GM12878 (cell line): ENCODE measurements at regions of chr16 and their contacts with region 1.

Region 1: DNA sequence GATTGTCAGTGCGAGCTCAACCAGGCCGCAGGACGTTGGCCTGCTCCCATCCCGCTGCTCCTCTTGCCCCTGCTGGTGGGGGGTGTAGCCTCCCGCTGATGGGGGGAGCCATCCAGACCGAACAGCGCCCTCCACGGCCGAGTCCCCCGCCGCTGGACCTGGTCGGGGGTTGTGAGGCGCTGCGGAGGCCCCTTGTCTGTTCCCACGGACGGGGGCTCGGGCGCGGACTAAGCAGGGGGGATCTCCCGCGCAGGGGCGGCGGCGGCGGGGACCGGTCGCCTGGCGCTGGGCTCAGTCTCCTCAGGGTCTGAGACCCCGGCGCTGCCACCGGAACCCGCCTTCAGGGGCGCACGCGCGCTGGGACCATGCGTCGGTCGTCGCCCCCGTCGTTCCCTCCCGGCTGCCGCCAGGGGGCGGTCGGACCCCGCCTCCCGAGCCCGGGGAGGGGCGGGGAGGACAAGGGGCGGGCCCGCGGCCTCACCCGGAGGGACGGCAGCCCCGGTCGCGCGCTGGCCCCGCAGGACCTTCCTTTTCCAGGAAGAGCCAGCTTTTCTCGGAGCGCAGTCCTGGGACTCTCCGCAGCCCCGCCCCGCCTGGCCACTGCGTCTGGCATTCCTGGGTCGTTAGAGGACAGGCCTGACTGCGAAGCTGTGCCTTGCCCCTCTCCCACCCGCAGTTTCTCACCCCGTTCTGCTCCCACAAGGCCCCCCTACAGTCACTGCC is 6.3 kb upstream of the IL32 start:
- DNase-seq: no peak
- ATAC-seq: peak; percentile 97
- H3K4me3 ChIP-seq: peak overlapping the region; percentile 87
- H3K27ac ChIP-seq: peak overlapping the region; percentile 70
- H3K4me1 ChIP-seq: peaks cover 16% of the 10 kb centered on the region
- H3K27me3 ChIP-seq: no peaks in the 10 kb centered on the region
- CTCF ChIP-seq: peak; percentile 71 to 94 (median 85)
- EP300 ChIP-seq: no peak
- POLR2A ChIP-seq: peak; percentile 71
- RAD21 ChIP-seq: peak; percentile 93

Region 2: DNA sequence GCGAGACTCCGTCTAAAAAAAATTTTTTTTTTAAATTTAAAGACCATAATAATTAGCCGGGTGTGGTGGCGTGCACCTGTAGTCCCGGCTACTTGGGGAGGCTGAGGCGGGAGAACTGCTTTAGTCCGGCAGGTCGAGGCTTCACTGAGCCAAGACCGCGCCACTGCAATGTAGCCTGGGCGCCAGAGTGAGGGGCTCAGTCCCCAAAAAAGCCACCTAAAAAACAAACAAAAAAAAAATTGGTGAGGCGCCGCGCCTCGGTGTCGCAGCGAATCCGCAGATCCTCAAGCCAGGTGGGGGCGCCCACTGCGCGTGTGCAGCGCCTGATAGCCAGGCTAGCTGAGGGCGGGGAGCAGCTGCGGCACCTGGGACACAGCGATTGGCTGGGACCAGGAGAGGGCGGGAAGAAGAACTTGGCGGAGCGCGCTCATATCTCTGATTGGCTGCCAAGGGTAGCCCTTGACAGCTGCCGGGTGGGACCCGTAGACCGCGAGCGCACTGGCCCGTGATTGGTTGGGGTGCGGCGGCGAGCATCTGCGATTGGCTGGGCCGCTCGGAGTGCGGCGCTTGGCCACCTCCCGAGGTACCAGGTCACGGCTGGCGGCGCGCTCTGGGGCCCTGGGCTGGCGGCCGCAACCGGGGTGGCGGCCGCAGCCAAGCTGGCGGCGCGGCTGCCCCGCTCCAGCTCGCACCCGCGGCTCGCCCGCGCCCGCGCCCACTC is 55.4 kb before region 1 on chr16:
- CTCF ChIA-PET with region 1: interaction called, 10 read pairs
- POLR2A ChIA-PET with region 1: no interaction called
- RAD21 ChIA-PET with region 1: interaction called, 6 read pairs
- SMC1A ChIA-PET with region 1: interaction called, 5 read pairs
- in situ Hi-C with region 1: no loop called
- intact Hi-C with region 1: no loop called
- DNase-seq: peak; percentile 97
- ATAC-seq: peak; percentile 100
- H3K4me3 ChIP-seq: no peak overlapping the region
- H3K27ac ChIP-seq: no peak overlapping the region
- H3K4me1 ChIP-seq: peaks cover 17% of the 10 kb centered on the region
- H3K27me3 ChIP-seq: peaks cover 0 to 7% of the 10 kb centered on the region in 2 experiments; a peak in 3 of 4 replicates
- CTCF ChIP-seq: peak; percentile 56 to 75 (median 64)
- EP300 ChIP-seq: no peak
- POLR2A ChIP-seq: no peak
- RAD21 ChIP-seq: peak; percentile 71

Region 3: DNA sequence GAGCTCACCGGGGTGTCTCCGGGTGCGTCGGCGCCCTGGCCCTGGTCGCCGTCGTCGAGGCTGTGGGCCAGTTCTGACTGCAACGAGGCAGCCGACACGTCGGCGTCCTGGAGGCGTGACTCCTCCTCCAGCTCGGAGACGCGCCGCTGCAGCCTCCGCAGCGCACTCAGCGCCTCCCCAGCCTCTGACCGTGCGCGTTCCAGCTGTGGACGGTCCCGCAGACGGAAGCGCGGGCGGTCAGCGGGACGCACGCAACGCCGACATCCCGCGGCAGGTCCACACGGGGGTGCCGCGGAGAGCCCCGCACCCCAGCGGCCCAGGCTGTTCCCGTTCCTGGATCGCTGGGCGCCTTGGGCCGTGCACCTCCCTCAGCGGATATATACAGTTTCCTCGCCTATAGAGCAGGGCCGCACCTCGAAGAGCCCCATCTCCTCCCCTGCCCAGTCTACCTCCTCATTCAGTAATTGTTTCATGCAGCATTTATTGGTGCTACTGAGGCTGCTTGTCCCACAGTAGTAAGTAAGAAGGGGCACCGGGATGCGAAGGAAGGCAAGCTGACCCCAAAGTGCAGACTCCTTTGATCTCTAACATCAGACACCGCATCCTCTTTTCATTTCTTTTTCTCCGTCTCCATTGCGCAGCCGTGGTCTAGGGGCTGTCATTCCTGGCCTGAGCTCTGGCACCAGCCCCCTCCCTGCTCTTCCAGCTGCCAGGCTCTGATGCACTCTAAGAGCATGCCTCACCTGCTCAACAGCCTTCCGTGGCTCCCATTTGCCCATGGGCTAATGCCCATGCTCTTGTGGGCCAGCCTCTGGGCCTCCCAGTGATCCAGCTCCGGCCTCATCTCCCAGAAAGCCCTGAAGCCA is 29.4 kb before region 1 on chr16:
- CTCF ChIA-PET with region 1: interaction called, 62 read pairs
- POLR2A ChIA-PET with region 1: interaction called, 4 read pairs
- RAD21 ChIA-PET with region 1: interaction called, 28 read pairs
- SMC1A ChIA-PET with region 1: interaction called, 5 read pairs
- in situ Hi-C with region 1: no loop called
- intact Hi-C with region 1: no loop called
- DNase-seq: no peak
- ATAC-seq: no peak
- H3K4me3 ChIP-seq: no peak overlapping the region
- H3K27ac ChIP-seq: no peak overlapping the region
- H3K4me1 ChIP-seq: peaks cover 6% of the 10 kb centered on the region
- H3K27me3 ChIP-seq: peaks cover 7 to 8% of the 10 kb centered on the region in 2 experiments
- CTCF ChIP-seq: no peak
- EP300 ChIP-seq: no peak
- POLR2A ChIP-seq: peak; percentile 22; the same call in 1 of the 2 replicates
- RAD21 ChIP-seq: no peak

Region 4: DNA sequence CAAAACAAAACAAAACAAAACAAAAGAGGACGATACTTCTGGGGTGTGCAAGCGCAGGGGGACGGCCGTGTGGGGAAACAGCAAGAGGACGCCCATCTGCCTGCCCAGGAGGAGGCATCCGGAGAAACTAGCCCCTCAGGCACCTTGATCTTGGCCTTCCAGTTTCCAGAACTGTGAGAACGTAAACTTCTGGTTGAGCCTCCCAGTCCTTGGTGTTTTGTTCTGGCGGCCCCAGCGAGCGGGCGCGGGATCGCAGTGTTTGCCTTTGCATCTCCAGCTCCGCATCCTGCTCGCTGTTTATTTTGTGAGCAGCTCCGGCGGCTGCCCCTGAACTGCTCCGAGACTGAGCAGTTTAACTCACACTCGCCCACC is 13.8 kb before region 1 on chr16:
- CTCF ChIA-PET with region 1: interaction called, 23 read pairs
- POLR2A ChIA-PET with region 1: no interaction called
- RAD21 ChIA-PET with region 1: interaction called, 3 read pairs
- SMC1A ChIA-PET with region 1: interaction called, 4 read pairs
- in situ Hi-C with region 1: no loop called
- intact Hi-C with region 1: no loop called
- DNase-seq: no peak
- ATAC-seq: peak; percentile 45
- H3K4me3 ChIP-seq: peak overlapping the region; percentile 82; the same call in 1 of the 2 replicates
- H3K27ac ChIP-seq: no peak overlapping the region
- H3K4me1 ChIP-seq: peaks cover 2% of the 10 kb centered on the region; the same call in 1 of the 2 replicates
- H3K27me3 ChIP-seq: peaks cover 0 to 1% of the 10 kb centered on the region in 2 experiments; a peak in 2 of 4 replicates
- CTCF ChIP-seq: no peak
- EP300 ChIP-seq: no peak
- POLR2A ChIP-seq: no peak
- RAD21 ChIP-seq: no peak

Region 5: DNA sequence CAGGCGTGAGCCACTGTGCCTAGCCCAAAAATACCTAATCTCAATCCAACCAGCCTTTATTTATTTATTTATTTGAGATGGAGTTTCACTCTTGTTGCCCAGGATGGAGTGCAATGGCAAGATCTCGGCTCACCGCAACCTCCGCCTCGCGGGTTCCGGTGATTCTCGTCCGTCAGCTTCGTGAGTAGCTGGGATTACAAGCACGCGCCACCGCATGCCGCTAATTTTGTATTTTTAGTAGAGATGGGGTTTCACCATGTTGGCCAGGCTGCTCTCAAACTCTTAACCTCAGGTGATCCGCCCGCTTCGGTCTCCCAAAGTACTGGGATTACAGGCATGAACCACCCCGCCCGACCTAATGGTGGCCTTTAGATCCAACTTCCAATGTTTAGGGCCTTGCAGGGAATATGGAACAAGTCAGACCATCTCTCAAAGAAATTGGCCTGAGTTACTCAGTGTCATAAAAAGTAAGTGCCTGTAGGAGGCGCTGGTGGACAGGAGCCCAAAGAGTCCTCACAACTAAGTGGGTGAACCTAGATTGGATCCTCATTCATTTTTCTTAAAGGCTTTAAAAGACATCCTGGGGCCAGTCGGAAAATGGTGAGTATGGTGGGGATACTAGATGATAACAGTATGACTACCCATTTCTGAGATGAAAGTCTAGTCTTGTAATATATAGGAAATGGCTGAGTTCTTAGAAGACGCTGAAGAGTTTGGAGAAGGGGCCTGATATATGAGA is 35.3 kb after region 1 on chr16:
- CTCF ChIA-PET with region 1: interaction called, 19 read pairs
- POLR2A ChIA-PET with region 1: interaction called, 3 read pairs
- RAD21 ChIA-PET with region 1: interaction called, 6 read pairs
- SMC1A ChIA-PET with region 1: interaction called, 3 read pairs
- in situ Hi-C with region 1: loop called (anchors 5 kb)
- intact Hi-C with region 1: loop called (anchors 1 kb)
- DNase-seq: no peak
- ATAC-seq: peak; percentile 72
- H3K4me3 ChIP-seq: no peak overlapping the region
- H3K27ac ChIP-seq: no peak overlapping the region
- H3K4me1 ChIP-seq: peaks cover 6% of the 10 kb centered on the region; the same call in 1 of the 2 replicates
- H3K27me3 ChIP-seq: no peaks in the 10 kb centered on the region
- CTCF ChIP-seq: peak; percentile 64 to 75 (median 68)
- EP300 ChIP-seq: no peak
- POLR2A ChIP-seq: no peak
- RAD21 ChIP-seq: peak; percentile 63

Region 6: GRCh38 chr16:3123986-3124886 is 65.1 kb after region 1 on chr16:
- CTCF ChIA-PET with region 1: interaction called, 174 read pairs
- POLR2A ChIA-PET with region 1: interaction called, 12 read pairs
- RAD21 ChIA-PET with region 1: interaction called, 72 read pairs
- SMC1A ChIA-PET with region 1: interaction called, 53 read pairs
- in situ Hi-C with region 1: loop called (anchors 5 kb)
- intact Hi-C with region 1: loop called (anchors 1 kb)
- DNase-seq: peak; percentile 72
- ATAC-seq: peak; percentile 97
- H3K4me3 ChIP-seq: peak overlapping the region; percentile 69; the same call in 1 of the 2 replicates
- H3K27ac ChIP-seq: peak overlapping the region; percentile 74
- H3K4me1 ChIP-seq: peaks cover 10% of the 10 kb centered on the region
- H3K27me3 ChIP-seq: no peaks in the 10 kb centered on the region
- CTCF ChIP-seq: peak; percentile 16 to 43 (median 30); a peak in 4 of 6 replicates
- EP300 ChIP-seq: no peak
- POLR2A ChIP-seq: peak; percentile 87
- RAD21 ChIP-seq: no peak

Region 7: GRCh38 chr16:3173892-3174617 is 114.9 kb after region 1 on chr16:
- CTCF ChIA-PET with region 1: interaction called, 14 read pairs
- POLR2A ChIA-PET with region 1: no interaction called
- RAD21 ChIA-PET with region 1: interaction called, 5 read pairs
- SMC1A ChIA-PET with region 1: no interaction called
- in situ Hi-C with region 1: no loop called
- intact Hi-C with region 1: no loop called
- DNase-seq: no peak
- ATAC-seq: peak; percentile 16
- H3K4me3 ChIP-seq: peak overlapping the region; percentile 22
- H3K27ac ChIP-seq: peak overlapping the region; percentile 25; the same call in 1 of the 2 replicates
- H3K4me1 ChIP-seq: peaks cover 35% of the 10 kb centered on the region
- H3K27me3 ChIP-seq: no peaks in the 10 kb centered on the region; a peak in 1 of 4 replicates
- CTCF ChIP-seq: peak; percentile 30 to 55 (median 54); a peak in 5 of 6 replicates
- EP300 ChIP-seq: no peak
- POLR2A ChIP-seq: no peak; the same call in 1 of the 2 replicates
- RAD21 ChIP-seq: no peak